ENCODE measurements at regions of chrX and their contacts with region 1.

Region 1: GRCh38 chrX:131802835-131803626 is 220.1 kb upstream of the STK26 start:
- DNase-seq: peak; percentile 68
- ATAC-seq: peak; percentile 97
- H3K4me3 ChIP-seq: peak overlapping the region; percentile 58; the same call in 1 of the 2 replicates
- H3K27ac ChIP-seq: peak overlapping the region; percentile 65
- H3K4me1 ChIP-seq: no peaks in the 10 kb centered on the region
- H3K27me3 ChIP-seq: no peaks in the 10 kb centered on the region
- CTCF ChIP-seq: peak; percentile 75 to 83 (median 75)
- EP300 ChIP-seq: no peak
- POLR2A ChIP-seq: no peak
- RAD21 ChIP-seq: peak; percentile 61

Region 2: GRCh38 chrX:130975947-130976346 is 827.1 kb before region 1 on chrX:
- CTCF ChIA-PET with region 1: no interaction called
- POLR2A ChIA-PET with region 1: no interaction called
- RAD21 ChIA-PET with region 1: no interaction called
- SMC1A ChIA-PET with region 1: interaction called, 3 read pairs
- in situ Hi-C with region 1: no loop called
- intact Hi-C with region 1: loop called (anchors 1 kb)
- DNase-seq: no peak
- ATAC-seq: peak; percentile 92
- H3K4me3 ChIP-seq: no peak overlapping the region
- H3K27ac ChIP-seq: no peak overlapping the region
- H3K4me1 ChIP-seq: no peaks in the 10 kb centered on the region
- H3K27me3 ChIP-seq: no peaks in the 10 kb centered on the region
- CTCF ChIP-seq: peak; percentile 60 to 69 (median 63); a peak in 5 of 6 replicates
- EP300 ChIP-seq: no peak
- POLR2A ChIP-seq: no peak
- RAD21 ChIP-seq: peak; percentile 67

Region 3: DNA sequence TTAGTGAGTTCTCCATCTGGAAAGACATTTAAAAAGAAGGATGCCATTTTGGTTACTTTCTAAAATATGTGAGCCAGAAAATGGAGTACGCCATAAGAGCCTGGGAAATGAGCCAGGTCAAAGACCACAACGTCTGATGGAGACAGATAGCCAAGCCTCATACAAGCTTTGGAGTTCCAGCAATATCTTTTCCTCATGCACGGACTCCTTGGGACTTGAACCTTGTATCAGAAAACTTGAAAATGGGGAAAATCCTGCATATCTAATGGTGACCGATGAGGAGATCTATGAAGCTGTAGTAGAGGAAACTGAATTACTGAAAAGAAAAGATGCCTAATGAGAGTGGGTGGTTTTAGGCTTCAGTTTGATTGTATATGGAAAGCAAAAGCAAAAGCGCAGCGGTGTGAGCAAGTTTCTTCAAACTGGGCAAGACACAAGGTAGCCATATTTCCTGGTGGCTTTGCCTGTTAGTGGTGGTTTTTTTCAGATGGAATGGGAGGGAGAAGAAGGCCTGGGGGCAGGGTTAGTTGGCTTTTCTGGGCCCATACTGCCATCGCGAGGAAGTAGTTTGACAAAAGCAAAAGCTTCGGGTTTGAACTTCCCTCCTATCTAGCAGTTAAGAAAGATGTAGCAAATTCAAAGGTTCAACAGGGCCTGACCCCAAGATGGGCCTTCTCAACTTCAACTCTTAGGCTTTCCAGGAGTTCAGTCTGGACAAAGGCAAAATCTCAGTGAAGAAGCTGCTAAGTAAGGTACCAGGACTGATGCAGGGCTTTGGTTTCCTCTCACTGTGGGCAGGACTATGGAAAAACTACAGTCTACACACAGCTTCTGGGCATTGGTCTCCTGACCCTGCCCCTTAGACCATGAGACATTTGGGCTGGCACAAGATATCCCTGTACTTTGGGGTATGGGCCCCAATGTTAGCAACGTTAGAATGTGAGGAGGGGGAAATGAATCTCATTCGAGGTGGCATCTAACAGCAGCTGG is 10.1 kb after region 1 on chrX:
- CTCF ChIA-PET with region 1: interaction called, 21 read pairs
- POLR2A ChIA-PET with region 1: interaction called, 3 read pairs
- RAD21 ChIA-PET with region 1: interaction called, 14 read pairs
- SMC1A ChIA-PET with region 1: interaction called, 12 read pairs
- in situ Hi-C with region 1: no loop called
- intact Hi-C with region 1: no loop called
- DNase-seq: peak; percentile 92
- ATAC-seq: peak; percentile 95
- H3K4me3 ChIP-seq: peak overlapping the region; percentile 58
- H3K27ac ChIP-seq: peak overlapping the region; percentile 84
- H3K4me1 ChIP-seq: peaks cover 13% of the 10 kb centered on the region; the same call in 1 of the 2 replicates
- H3K27me3 ChIP-seq: no peaks in the 10 kb centered on the region
- CTCF ChIP-seq: peak; percentile 45 to 86 (median 64); a peak in 5 of 6 replicates
- EP300 ChIP-seq: peak in 1 of 2 experiments; percentile 53; a peak in 2 of 4 replicates
- POLR2A ChIP-seq: no peak
- RAD21 ChIP-seq: peak; percentile 89

Region 4: DNA sequence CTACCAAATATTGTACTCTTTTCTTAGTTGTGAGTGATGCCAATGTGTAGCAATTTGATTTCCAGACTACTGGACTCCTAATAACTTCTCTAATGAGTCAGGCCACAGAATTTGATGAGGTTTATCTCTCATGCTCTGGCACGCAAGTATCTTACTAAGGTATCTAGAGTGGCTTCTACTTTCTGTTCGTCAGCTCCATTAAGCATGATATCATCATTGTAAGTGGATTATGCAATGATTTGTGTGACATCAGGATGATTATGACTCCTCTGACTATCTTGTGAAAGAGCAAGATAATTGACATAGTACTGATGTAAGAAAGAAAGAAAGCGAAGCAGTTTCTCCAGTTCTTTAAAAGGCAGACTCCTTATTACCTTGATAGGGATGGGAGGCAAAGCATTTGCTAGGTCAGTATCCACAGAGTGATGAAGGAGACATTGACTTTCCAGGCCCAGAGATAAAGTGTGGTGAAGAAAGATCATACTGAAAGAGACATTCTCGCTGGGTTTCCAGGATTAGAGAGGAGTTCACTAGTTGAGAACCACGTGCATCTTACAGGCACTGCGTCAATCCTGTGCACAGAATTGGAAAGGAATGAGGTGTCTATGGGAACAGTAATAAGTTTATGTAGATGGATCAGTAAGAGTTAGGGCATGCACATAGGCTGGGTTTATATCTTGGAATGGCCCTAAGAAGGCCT is 58.2 kb after region 1 on chrX:
- CTCF ChIA-PET with region 1: no interaction called
- POLR2A ChIA-PET with region 1: no interaction called
- RAD21 ChIA-PET with region 1: no interaction called
- SMC1A ChIA-PET with region 1: no interaction called
- in situ Hi-C with region 1: no loop called
- intact Hi-C with region 1: no loop called
- DNase-seq: no peak
- ATAC-seq: no peak
- H3K4me3 ChIP-seq: no peak overlapping the region
- H3K27ac ChIP-seq: no peak overlapping the region
- H3K4me1 ChIP-seq: no peaks in the 10 kb centered on the region
- H3K27me3 ChIP-seq: peaks cover 0 to 2% of the 10 kb centered on the region in 2 experiments; a peak in 1 of 4 replicates
- CTCF ChIP-seq: no peak
- EP300 ChIP-seq: no peak
- POLR2A ChIP-seq: no peak
- RAD21 ChIP-seq: no peak

Region 5: GRCh38 chrX:132452911-132453550 is 650.0 kb after region 1 on chrX:
- CTCF ChIA-PET with region 1: no interaction called
- POLR2A ChIA-PET with region 1: no interaction called
- RAD21 ChIA-PET with region 1: no interaction called
- SMC1A ChIA-PET with region 1: no interaction called
- in situ Hi-C with region 1: no loop called
- intact Hi-C with region 1: no loop called
- DNase-seq: no peak
- ATAC-seq: no peak
- H3K4me3 ChIP-seq: no peak overlapping the region
- H3K27ac ChIP-seq: no peak overlapping the region
- H3K4me1 ChIP-seq: no peaks in the 10 kb centered on the region
- H3K27me3 ChIP-seq: no peaks in the 10 kb centered on the region
- CTCF ChIP-seq: no peak
- EP300 ChIP-seq: no peak
- POLR2A ChIP-seq: no peak
- RAD21 ChIP-seq: no peak

Measured in GM12878 (cell line).